CD4-positive, alpha-beta memory T cell (primary cell): ENCODE measurements at regions of chr9 and their contacts with region 1.

Region 1: GRCh38 chr9:114108016-114108833 is 9.1 kb upstream of the KIF12 start:
- DNase-seq: peak in 4 of 5 donors; percentile 18 to 23 (median 21)
- H3K4me3 ChIP-seq: no peak overlapping the region
- H3K4me3 Mint-ChIP-seq: no peak overlapping the region
- H3K27ac ChIP-seq: no peak overlapping the region
- H3K27ac Mint-ChIP-seq: no peak overlapping the region
- H3K4me1 ChIP-seq: no peaks in the 10 kb centered on the region
- H3K4me1 Mint-ChIP-seq: no peaks in the 10 kb centered on the region
- H3K27me3 ChIP-seq: no peaks in the 10 kb centered on the region
- H3K27me3 Mint-ChIP-seq: peaks cover 8 to 10% of the 10 kb centered on the region in 2 donors

Region 2: GRCh38 chr9:114004221-114004716 is 104.0 kb before region 1 on chr9:
- CTCF ChIA-PET with region 1: no interaction called
- POLR2A ChIA-PET with region 1: no interaction called
- intact Hi-C with region 1: no loop called
- DNase-seq: no peak
- H3K4me3 ChIP-seq: no peak overlapping the region
- H3K4me3 Mint-ChIP-seq: no peak overlapping the region
- H3K27ac ChIP-seq: no peak overlapping the region
- H3K27ac Mint-ChIP-seq: no peak overlapping the region
- H3K4me1 ChIP-seq: no peaks in the 10 kb centered on the region
- H3K4me1 Mint-ChIP-seq: no peaks in the 10 kb centered on the region
- H3K27me3 ChIP-seq: no peaks in the 10 kb centered on the region
- H3K27me3 Mint-ChIP-seq: no peaks in the 10 kb centered on the region

Region 3: DNA sequence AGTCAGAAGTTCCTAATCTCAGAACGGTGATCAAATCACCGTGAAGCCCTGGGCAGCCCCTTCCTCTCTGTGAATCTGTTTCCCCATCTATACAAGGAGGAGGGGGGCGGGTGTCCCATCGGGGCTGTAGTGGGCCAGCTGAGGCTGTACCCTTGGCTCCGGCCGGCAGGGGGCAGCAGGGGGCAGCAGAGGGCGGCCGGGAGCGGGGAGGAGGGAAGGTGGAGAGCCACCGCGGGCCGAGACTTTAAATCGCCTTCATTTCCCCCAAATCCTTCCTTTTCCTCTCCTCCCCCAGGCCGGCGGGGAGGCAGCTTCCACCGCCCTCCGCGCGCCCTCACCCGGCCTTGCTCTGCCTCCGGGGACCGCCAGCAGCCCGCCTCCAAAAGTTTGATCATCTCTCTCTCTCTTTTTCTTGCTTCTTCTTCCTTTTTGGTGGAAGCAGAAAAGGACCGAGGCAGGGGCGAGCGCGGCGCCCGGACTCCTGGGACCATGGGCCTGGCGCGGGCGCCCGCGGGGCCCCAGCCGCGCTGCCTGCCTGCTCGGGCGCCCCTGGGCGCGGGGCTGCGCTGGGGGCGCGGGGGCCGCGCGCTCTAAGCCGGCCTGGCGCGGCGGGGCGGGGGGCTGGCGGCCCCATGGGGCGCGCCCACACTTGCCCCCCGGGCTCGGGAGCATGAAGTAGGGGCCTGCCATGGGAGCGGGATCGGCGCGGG is 47.2 kb after region 1 on chr9 and contains the start of gene COL27A1:
- CTCF ChIA-PET with region 1: no interaction called
- POLR2A ChIA-PET with region 1: no interaction called
- intact Hi-C with region 1: loop called (anchors 2 kb)
- DNase-seq: peak; percentile 62 to 73 (median 66)
- H3K4me3 ChIP-seq: peak within 1 kb of the TSS in 1 of 2 donors; percentile 15
- H3K4me3 Mint-ChIP-seq: peak within 1 kb of the TSS; percentile 90 to 99 (median 93)
- H3K27ac ChIP-seq: no peak within 1 kb of the TSS
- H3K27ac Mint-ChIP-seq: peak within 1 kb of the TSS in 5 of 7 donors; percentile 63 to 88 (median 70)
- H3K4me1 ChIP-seq: peaks cover 17% of the 10 kb centered on the region
- H3K4me1 Mint-ChIP-seq: peaks cover 15 to 28% (median 21%) of the 10 kb centered on the region in 4 donors
- H3K27me3 ChIP-seq: peaks cover 22% of the 10 kb centered on the region
- H3K27me3 Mint-ChIP-seq: peaks cover 20 to 39% of the 10 kb centered on the region in 2 donors
- total RNA-seq, gene COL27A1: 1.3 TPM